ENCODE measurements at regions of chr13 and their contacts with region 1.

Region 1: GRCh38 chr13:49374585-49375290 is 69.1 kb downstream of the CAB39L start:
- DNase-seq: no peak
- ATAC-seq: no peak
- H3K4me3 ChIP-seq: no peak overlapping the region
- H3K27ac ChIP-seq: no peak overlapping the region
- H3K4me1 ChIP-seq: peaks cover 31% of the 10 kb centered on the region
- H3K27me3 ChIP-seq: no peaks in the 10 kb centered on the region
- CTCF ChIP-seq: no peak
- EP300 ChIP-seq: no peak
- POLR2A ChIP-seq: no peak
- RAD21 ChIP-seq: no peak

Region 2: GRCh38 chr13:49308089-49308875 is 66.5 kb before region 1 on chr13:
- CTCF ChIA-PET with region 1: no interaction called
- POLR2A ChIA-PET with region 1: no interaction called
- in situ Hi-C with region 1: loop called (anchors 5 kb)
- intact Hi-C with region 1: loop called (anchors 5 kb)
- DNase-seq: peak; percentile 63
- ATAC-seq: peak; percentile 46
- H3K4me3 ChIP-seq: no peak overlapping the region
- H3K27ac ChIP-seq: no peak overlapping the region
- H3K4me1 ChIP-seq: peaks cover 41% of the 10 kb centered on the region
- H3K27me3 ChIP-seq: no peaks in the 10 kb centered on the region
- CTCF ChIP-seq: no peak
- EP300 ChIP-seq: 0 out of 4 replicates have a peak, but pooled peaks of 1 of the 2 experiments have one; percentile 14
- POLR2A ChIP-seq: no peak
- RAD21 ChIP-seq: no peak

Measured in HepG2 (cell line).